SK-N-SH (cell line): ENCODE measurements at regions of chr7 and their contacts with region 1.

Region 1: GRCh38 chr7:50595491-50596102 is 30.4 kb upstream of the DDC start:
- DNase-seq: peak; percentile 76
- H3K4me3 ChIP-seq: no peak overlapping the region
- H3K27ac ChIP-seq: no peak overlapping the region
- H3K4me1 ChIP-seq: peaks cover 0 to 19% of the 10 kb centered on the region in 2 experiments; a peak in 1 of 4 replicates
- H3K27me3 ChIP-seq: no peaks in the 10 kb centered on the region
- CTCF ChIP-seq: peak; percentile 73
- EP300 ChIP-seq: no peak
- RAD21 ChIP-seq: peak; percentile 75

Region 2: GRCh38 chr7:50560865-50561351 is 34.7 kb before region 1 on chr7:
- CTCF ChIA-PET with region 1: interaction called, 14 read pairs
- POLR2A ChIA-PET with region 1: interaction called, 11 read pairs
- DNase-seq: peak; percentile 91
- H3K4me3 ChIP-seq: peak overlapping the region; percentile 28 to 55; a peak in 3 of 4 replicates
- H3K27ac ChIP-seq: peak overlapping the region in 1 of 2 experiments; percentile 99; a peak in 2 of 4 replicates
- H3K4me1 ChIP-seq: peaks cover 0 to 66% of the 10 kb centered on the region in 2 experiments; a peak in 2 of 4 replicates
- H3K27me3 ChIP-seq: peaks cover 60% of the 10 kb centered on the region
- CTCF ChIP-seq: no peak
- EP300 ChIP-seq: peak in 1 of 2 experiments; percentile 85; a peak in 2 of 4 replicates
- RAD21 ChIP-seq: peak; percentile 25

Region 3: GRCh38 chr7:50610521-50611277 is 15.1 kb after region 1 on chr7:
- CTCF ChIA-PET with region 1: interaction called, 46 read pairs
- POLR2A ChIA-PET with region 1: no interaction called
- DNase-seq: no peak
- H3K4me3 ChIP-seq: no peak overlapping the region
- H3K27ac ChIP-seq: peak overlapping the region in 1 of 2 experiments; percentile 6; a peak in 2 of 4 replicates
- H3K4me1 ChIP-seq: peaks cover 4 to 13% of the 10 kb centered on the region in 2 experiments; a peak in 1 of 4 replicates
- H3K27me3 ChIP-seq: no peaks in the 10 kb centered on the region
- CTCF ChIP-seq: no peak
- EP300 ChIP-seq: no peak
- RAD21 ChIP-seq: no peak

Region 4: GRCh38 chr7:50620433-50620832 is 24.8 kb after region 1 on chr7:
- CTCF ChIA-PET with region 1: interaction called, 16 read pairs
- POLR2A ChIA-PET with region 1: no interaction called
- DNase-seq: no peak
- H3K4me3 ChIP-seq: no peak overlapping the region
- H3K27ac ChIP-seq: no peak overlapping the region
- H3K4me1 ChIP-seq: peaks cover 0 to 21% of the 10 kb centered on the region in 2 experiments; a peak in 1 of 4 replicates
- H3K27me3 ChIP-seq: no peaks in the 10 kb centered on the region
- CTCF ChIP-seq: no peak
- EP300 ChIP-seq: no peak
- RAD21 ChIP-seq: no peak